Natural killer cell (primary cell): ENCODE measurements at regions of chr1 and their contacts with region 1.

Region 1: GRCh38 chr1:101112051-101112780 is 86.6 kb upstream of the DPH5 start:
- DNase-seq: peak; percentile 46 to 93
- ATAC-seq: peak; percentile 93 to 96 (median 96)
- H3K4me3 ChIP-seq: no peak overlapping the region
- H3K4me3 Mint-ChIP-seq: peak overlapping the region; percentile 68
- H3K27ac ChIP-seq: peak overlapping the region; percentile 88
- H3K27ac Mint-ChIP-seq: peak overlapping the region; percentile 81 to 90
- H3K4me1 ChIP-seq: peaks cover 15% of the 10 kb centered on the region
- H3K4me1 Mint-ChIP-seq: peaks cover 34 to 43% of the 10 kb centered on the region in 2 donors
- H3K27me3 ChIP-seq: no peaks in the 10 kb centered on the region
- H3K27me3 Mint-ChIP-seq: no peaks in the 10 kb centered on the region
- CTCF ChIP-seq: no peak

Region 2: GRCh38 chr1:101081496-101082488 is 30.4 kb before region 1 on chr1:
- intact Hi-C with region 1: loop called (anchors 5 kb)
- DNase-seq: peak; percentile 21 to 65
- ATAC-seq: peak; percentile 92 to 100 (median 93)
- H3K4me3 ChIP-seq: no peak overlapping the region
- H3K4me3 Mint-ChIP-seq: peak overlapping the region; percentile 81
- H3K27ac ChIP-seq: peak overlapping the region; percentile 28
- H3K27ac Mint-ChIP-seq: peak overlapping the region; percentile 90 to 91
- H3K4me1 ChIP-seq: peaks cover 8% of the 10 kb centered on the region
- H3K4me1 Mint-ChIP-seq: peaks cover 32 to 38% of the 10 kb centered on the region in 2 donors
- H3K27me3 ChIP-seq: no peaks in the 10 kb centered on the region
- H3K27me3 Mint-ChIP-seq: no peaks in the 10 kb centered on the region
- CTCF ChIP-seq: no peak